A673 (cell line): ENCODE measurements at regions of chr14 and their contacts with region 1.

Region 1: DNA sequence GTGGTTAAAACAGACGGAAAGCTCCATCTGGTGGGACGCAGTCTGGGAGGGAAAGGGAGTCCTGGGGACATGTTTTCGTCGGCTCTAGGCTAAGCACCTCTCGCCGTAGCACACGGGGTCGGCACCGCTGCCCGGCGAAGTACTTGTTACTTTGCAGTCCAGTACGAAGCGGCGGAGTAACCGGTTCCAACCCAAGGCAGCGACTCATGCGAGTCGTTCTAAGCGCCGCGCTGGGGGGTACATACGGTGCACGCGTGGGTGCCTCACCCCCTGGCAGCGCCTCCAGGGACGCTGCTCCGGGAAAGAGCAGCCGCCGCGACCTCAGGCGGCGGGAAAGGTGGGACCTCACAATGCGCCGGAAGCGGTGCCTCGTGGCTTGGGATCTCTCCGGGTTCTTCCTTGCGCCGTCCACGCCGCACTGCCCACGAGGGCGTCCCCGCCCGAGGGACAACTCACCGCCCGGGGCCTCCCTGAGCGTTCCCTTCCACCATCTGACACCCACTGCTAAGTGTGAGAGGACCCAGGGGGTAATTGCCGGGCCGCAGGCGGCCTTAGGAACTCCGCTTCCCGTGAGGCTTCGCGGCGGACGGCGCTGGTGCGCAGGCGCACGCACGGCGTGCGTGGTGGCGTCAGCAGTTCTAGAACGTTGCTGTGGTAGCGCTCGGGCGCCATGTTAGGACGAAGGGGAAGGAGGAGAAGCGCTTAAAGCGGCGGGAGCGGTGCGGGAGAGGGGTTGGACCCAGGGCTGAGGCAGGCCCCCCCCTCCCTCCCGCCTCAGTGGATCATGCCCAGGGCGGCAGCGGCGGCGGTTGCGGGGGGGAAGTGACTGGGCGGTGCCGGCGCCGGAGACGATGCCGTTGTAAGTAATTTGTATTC is at the start of gene PAPOLA:
- DNase-seq: peak; percentile 98
- H3K4me3 ChIP-seq: peak within 1 kb of the TSS; percentile 85
- H3K27ac ChIP-seq: peak within 1 kb of the TSS; percentile 94
- H3K4me1 ChIP-seq: peaks cover 16% of the 10 kb centered on the region
- H3K27me3 ChIP-seq: no peaks in the 10 kb centered on the region
- CTCF ChIP-seq: no peak
- total RNA-seq, gene PAPOLA: 318 and 337 TPM in 2 replicates

Region 2: GRCh38 chr14:96434040-96434787 is 67.8 kb before region 1 on chr14:
- CTCF ChIA-PET with region 1: no interaction called
- POLR2A ChIA-PET with region 1: no interaction called
- intact Hi-C with region 1: no loop called
- DNase-seq: peak; percentile 14
- H3K4me3 ChIP-seq: no peak overlapping the region
- H3K27ac ChIP-seq: no peak overlapping the region
- H3K4me1 ChIP-seq: no peaks in the 10 kb centered on the region
- H3K27me3 ChIP-seq: no peaks in the 10 kb centered on the region
- CTCF ChIP-seq: no peak

Region 3: GRCh38 chr14:96461950-96462683 is 39.9 kb before region 1 on chr14:
- CTCF ChIA-PET with region 1: no interaction called
- POLR2A ChIA-PET with region 1: no interaction called
- intact Hi-C with region 1: no loop called
- DNase-seq: no peak
- H3K4me3 ChIP-seq: no peak overlapping the region
- H3K27ac ChIP-seq: no peak overlapping the region
- H3K4me1 ChIP-seq: no peaks in the 10 kb centered on the region
- H3K27me3 ChIP-seq: no peaks in the 10 kb centered on the region
- CTCF ChIP-seq: no peak

Region 4: DNA sequence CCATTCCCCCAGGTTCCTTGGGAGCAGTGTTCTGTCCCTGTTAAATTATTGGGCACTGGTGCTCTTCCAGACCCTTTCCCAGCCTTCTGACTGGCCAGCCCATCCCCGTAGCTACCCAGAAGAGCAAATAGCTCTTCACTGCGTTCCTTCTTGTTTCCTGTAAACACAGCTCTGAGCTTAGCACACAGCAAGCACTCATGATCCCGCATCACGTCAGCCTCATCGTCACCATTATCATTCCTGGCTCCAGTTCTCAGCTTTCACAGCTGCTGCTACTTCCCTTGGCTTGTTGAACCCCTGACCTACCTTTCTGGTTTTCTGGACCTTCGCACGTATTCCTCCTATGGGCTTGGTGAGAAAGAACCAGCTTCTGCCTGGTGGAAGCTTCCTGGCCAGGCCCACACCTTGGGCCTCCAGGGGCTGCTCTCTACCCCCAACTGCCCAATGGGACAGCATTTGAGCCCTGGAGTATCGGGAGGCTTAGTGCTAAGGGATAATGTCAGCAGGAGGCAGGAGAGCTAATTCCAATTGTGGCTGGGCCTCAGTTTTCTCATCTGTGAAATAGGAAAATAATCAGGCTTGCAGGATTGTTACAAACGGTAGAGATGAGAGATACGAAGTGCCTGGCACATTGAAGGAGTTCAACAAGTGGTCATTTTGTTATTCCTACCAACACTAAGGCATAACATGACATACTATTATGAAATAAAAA is 22.4 kb before region 1 on chr14:
- CTCF ChIA-PET with region 1: no interaction called
- POLR2A ChIA-PET with region 1: no interaction called
- intact Hi-C with region 1: loop called (anchors 2 kb)
- DNase-seq: peak; percentile 50
- H3K4me3 ChIP-seq: peak overlapping the region; percentile 54
- H3K27ac ChIP-seq: peak overlapping the region; percentile 74
- H3K4me1 ChIP-seq: peaks cover 19% of the 10 kb centered on the region
- H3K27me3 ChIP-seq: no peaks in the 10 kb centered on the region
- CTCF ChIP-seq: no peak

Region 5: DNA sequence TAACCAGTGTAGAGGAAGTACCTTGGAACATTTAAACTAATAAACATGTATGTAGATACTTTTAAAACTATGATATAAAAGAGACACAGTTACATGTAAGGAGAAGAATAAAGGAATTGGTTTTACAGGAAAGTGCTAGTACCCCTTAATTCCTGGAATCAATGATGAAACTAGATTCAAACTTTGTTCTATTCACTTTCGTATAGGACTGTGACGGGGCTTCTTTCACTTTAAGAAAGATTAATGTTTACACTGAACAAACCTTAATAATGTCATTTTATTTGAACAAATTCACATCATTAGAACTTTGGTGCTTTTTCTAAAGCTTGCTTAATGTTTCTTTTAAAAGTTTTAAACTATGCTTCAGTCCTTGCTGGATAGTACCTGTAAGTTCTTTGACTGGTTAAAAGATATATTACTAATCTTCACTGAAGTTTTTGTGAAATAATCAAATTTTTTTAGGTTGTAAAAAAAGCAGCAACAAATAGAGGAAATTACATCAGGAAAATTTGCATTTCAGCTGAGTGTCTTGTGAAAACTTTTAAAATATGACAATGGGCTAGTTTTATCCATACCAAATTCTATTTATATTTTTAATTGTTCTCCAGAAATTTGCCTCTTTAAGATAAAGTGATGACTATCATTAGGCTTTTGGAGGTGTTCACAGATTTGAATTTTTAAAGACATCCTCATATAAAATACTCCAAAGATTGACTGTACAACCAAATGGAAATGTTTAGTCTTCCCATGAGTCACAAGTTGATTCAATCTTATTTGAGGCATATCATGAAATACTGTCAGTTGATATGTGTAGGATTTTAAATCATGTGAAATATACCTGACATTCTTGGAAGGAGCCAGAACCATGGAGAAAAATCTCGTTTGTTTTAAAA is 36.4 kb after region 1 on chr14:
- CTCF ChIA-PET with region 1: no interaction called
- POLR2A ChIA-PET with region 1: no interaction called
- intact Hi-C with region 1: loop called (anchors 5 kb)
- DNase-seq: no peak
- H3K4me3 ChIP-seq: no peak overlapping the region
- H3K27ac ChIP-seq: peak overlapping the region; percentile 41
- H3K4me1 ChIP-seq: peaks cover 8% of the 10 kb centered on the region
- H3K27me3 ChIP-seq: no peaks in the 10 kb centered on the region
- CTCF ChIP-seq: no peak

Region 6: GRCh38 chr14:98022541-98023520 is 1520.9 kb after region 1 on chr14:
- CTCF ChIA-PET with region 1: no interaction called
- POLR2A ChIA-PET with region 1: no interaction called
- intact Hi-C with region 1: no loop called
- DNase-seq: no peak
- H3K4me3 ChIP-seq: no peak overlapping the region
- H3K27ac ChIP-seq: no peak overlapping the region
- H3K4me1 ChIP-seq: no peaks in the 10 kb centered on the region
- H3K27me3 ChIP-seq: no peaks in the 10 kb centered on the region
- CTCF ChIP-seq: no peak